Esophagus muscularis mucosa (tissue), 4 donors: ENCODE measurements at regions of chr6 and their contacts with region 1.

Region 1: GRCh38 chr6:108947114-108947854 is 99.1 kb downstream of the ARMC2 start:
- DNase-seq: peak; percentile 72
- H3K4me3 ChIP-seq: no peak overlapping the region
- H3K27ac ChIP-seq: peak overlapping the region; percentile 82 to 89 (median 85)
- H3K4me1 ChIP-seq: peaks cover 72 to 80% (median 73%) of the 10 kb centered on the region in 4 donors
- H3K27me3 ChIP-seq: no peaks in the 10 kb centered on the region
- CTCF ChIP-seq: no peak
- EP300 ChIP-seq: no peak
- POLR2A ChIP-seq: no peak

Region 2: DNA sequence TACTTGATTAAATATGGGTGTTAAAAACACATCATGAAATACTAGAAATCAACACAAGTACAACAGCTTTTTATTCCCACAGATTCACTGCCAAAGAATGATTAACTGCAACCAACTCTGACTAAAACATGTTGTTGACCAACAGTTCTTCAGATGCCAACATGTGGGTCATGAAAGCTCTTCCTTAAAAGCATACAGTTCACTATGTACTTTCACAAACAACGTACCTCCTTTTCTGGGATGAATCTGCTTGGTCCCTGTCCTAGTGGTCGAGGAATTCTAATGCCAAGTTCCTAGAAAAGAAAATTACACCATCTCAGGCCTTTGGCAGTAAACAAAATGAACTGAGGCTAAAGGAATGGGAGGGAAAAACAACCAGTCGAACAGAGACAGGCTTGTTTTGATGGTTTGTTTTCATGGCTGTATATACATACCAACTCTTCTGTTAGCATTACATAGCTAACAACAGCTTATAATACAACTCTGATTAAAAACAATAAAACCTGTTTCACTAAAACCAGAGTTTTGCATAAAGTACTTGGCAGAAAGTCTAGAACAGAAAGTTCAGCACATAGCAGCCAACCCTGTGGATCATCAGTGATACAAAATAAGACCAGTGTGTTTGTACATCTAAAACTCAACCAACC is 54.9 kb after region 1 on chr6:
- intact Hi-C with region 1: loop called (anchors 5 kb)
- DNase-seq: no peak
- H3K4me3 ChIP-seq: peak overlapping the region; percentile 4 to 30 (median 26)
- H3K27ac ChIP-seq: peak overlapping the region; percentile 73 to 82 (median 74)
- H3K4me1 ChIP-seq: peaks cover 68 to 76% (median 70%) of the 10 kb centered on the region in 4 donors
- H3K27me3 ChIP-seq: no peaks in the 10 kb centered on the region
- CTCF ChIP-seq: no peak
- EP300 ChIP-seq: peak; percentile 46
- POLR2A ChIP-seq: no peak

Region 3: GRCh38 chr6:109059571-109060021 is 112.3 kb after region 1 on chr6:
- intact Hi-C with region 1: loop called (anchors 10 kb)
- DNase-seq: no peak
- H3K4me3 ChIP-seq: peak overlapping the region in 1 of 4 donors; percentile 3
- H3K27ac ChIP-seq: peak overlapping the region; percentile 54 to 69 (median 65)
- H3K4me1 ChIP-seq: peaks cover 44 to 96% (median 79%) of the 10 kb centered on the region in 4 donors
- H3K27me3 ChIP-seq: no peaks in the 10 kb centered on the region
- CTCF ChIP-seq: peak in 1 of 3 experiments; percentile 45
- EP300 ChIP-seq: no peak
- POLR2A ChIP-seq: no peak